K562 (cell line): ENCODE measurements at regions of chr3 and their contacts with region 1.

Region 1: GRCh38 chr3:24640330-24640877 is 145.8 kb upstream of the THRB start:
- DNase-seq: peak in 2 of 4 experiments; percentile 35 to 52
- ATAC-seq: peak; percentile 90
- H3K4me3 ChIP-seq: no peak overlapping the region
- H3K27ac ChIP-seq: no peak overlapping the region
- H3K4me1 ChIP-seq: peaks cover 0 to 4% of the 10 kb centered on the region in 2 experiments; a peak in 1 of 5 replicates
- H3K27me3 ChIP-seq: 0 out of 5 replicates have a peak, but pooled peaks cover 0 to 7% of the 10 kb centered on the region in 2 experiments
- CTCF ChIP-seq: peak; percentile 57 to 78 (median 59)
- EP300 ChIP-seq: no peak
- POLR2A ChIP-seq: no peak
- RAD21 ChIP-seq: peak; percentile 75 to 90

Region 2: DNA sequence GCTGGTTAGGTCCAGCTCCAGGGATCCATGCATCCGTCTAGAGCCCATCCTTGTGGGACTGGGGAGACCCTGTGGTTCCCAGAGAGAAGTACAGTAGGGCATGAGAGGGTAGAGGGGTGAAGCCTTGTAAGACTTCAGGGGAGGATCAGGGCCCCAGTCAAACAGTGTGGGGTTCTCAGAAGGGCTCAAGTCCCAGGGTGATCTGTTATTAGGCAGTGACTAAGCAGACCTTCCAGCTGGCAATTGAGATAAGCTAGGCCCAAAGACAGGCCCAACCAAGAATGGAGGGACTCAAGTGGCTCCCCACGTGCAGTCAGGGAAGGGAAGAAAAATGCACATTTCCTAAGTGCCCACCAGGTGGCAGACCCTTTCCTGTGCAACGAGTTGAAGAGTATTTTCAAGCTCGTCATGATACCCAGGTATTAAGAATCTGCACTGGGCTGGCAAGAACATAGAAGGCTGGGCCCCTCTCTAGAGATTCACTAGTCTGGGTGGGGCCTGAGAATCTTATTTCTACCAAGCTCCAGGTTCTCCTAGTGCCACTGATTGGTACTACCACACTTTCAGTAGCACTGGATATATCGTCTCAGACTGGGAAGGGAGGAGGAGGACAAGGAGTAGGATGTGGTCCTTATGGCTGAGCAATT is 454.5 kb before region 1 on chr3:
- CTCF ChIA-PET with region 1: interaction called, 4 read pairs
- POLR2A ChIA-PET with region 1: no interaction called
- in situ Hi-C with region 1: no loop called
- intact Hi-C with region 1: loop called (anchors 1 kb)
- DNase-seq: peak; percentile 88 to 94 (median 90)
- ATAC-seq: peak; percentile 98
- H3K4me3 ChIP-seq: no peak overlapping the region
- H3K27ac ChIP-seq: peak overlapping the region; percentile 76
- H3K4me1 ChIP-seq: peaks cover 4 to 8% of the 10 kb centered on the region in 2 experiments; a peak in 3 of 5 replicates
- H3K27me3 ChIP-seq: no peaks in the 10 kb centered on the region
- CTCF ChIP-seq: peak; percentile 92 to 93 (median 92)
- EP300 ChIP-seq: peak; percentile 87
- POLR2A ChIP-seq: no peak
- RAD21 ChIP-seq: peak; percentile 61 to 84

Region 3: DNA sequence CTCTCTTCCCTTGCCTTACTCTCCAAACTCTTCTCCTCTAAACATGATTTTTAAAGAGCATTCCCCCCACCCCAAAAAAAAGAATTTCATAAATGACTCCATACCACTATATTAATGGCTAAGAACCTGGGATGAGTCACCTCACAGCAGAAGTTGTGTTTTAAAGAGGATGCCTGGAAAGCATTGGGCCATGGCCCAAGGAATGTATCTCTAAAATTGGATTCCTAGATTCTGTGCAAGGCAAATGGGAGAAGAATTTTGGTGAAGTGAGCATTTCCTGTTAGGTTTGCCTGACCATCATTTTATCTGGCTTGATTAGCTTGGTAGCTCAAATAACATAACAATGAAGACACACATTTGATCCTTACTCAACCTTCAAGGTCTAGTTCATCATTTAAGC is 443.9 kb before region 1 on chr3:
- CTCF ChIA-PET with region 1: no interaction called
- POLR2A ChIA-PET with region 1: no interaction called
- in situ Hi-C with region 1: no loop called
- intact Hi-C with region 1: no loop called
- DNase-seq: no peak
- ATAC-seq: no peak
- H3K4me3 ChIP-seq: no peak overlapping the region
- H3K27ac ChIP-seq: no peak overlapping the region
- H3K4me1 ChIP-seq: no peaks in the 10 kb centered on the region
- H3K27me3 ChIP-seq: no peaks in the 10 kb centered on the region
- CTCF ChIP-seq: no peak
- EP300 ChIP-seq: no peak
- POLR2A ChIP-seq: no peak
- RAD21 ChIP-seq: no peak

Region 4: DNA sequence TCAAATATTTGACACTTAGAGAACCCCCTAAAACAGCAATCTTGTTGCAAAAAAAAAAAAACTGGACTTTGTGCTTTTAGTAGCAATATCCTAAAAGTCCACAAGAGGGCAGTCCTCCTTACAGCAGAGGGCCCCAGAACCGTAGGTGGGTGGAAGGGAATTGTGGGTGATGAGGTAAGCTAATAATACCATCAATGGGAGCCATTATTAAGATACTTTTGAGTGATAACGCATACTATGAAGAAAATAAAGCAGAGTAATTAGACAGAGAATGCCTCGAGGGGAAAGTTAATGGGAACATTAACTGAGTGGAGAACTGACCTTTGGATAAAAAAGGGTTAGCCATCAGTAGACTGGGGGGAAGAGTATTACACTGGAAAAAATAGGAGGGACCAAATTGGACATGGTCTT is 375.7 kb before region 1 on chr3:
- CTCF ChIA-PET with region 1: interaction called, 4 read pairs
- POLR2A ChIA-PET with region 1: no interaction called
- in situ Hi-C with region 1: no loop called
- intact Hi-C with region 1: loop called (anchors 1 kb)
- DNase-seq: peak; percentile 74 to 83 (median 78)
- ATAC-seq: peak; percentile 52
- H3K4me3 ChIP-seq: no peak overlapping the region
- H3K27ac ChIP-seq: no peak overlapping the region
- H3K4me1 ChIP-seq: peaks cover 9 to 24% of the 10 kb centered on the region in 2 experiments; a peak in 4 of 5 replicates
- H3K27me3 ChIP-seq: no peaks in the 10 kb centered on the region
- CTCF ChIP-seq: peak; percentile 71 to 87 (median 85)
- EP300 ChIP-seq: no peak
- POLR2A ChIP-seq: no peak
- RAD21 ChIP-seq: peak; percentile 73 to 82

Region 5: GRCh38 chr3:24365194-24365612 is 275.2 kb before region 1 on chr3:
- CTCF ChIA-PET with region 1: no interaction called
- POLR2A ChIA-PET with region 1: no interaction called
- in situ Hi-C with region 1: no loop called
- intact Hi-C with region 1: loop called (anchors 10 kb)
- DNase-seq: no peak
- ATAC-seq: peak; percentile 52
- H3K4me3 ChIP-seq: no peak overlapping the region
- H3K27ac ChIP-seq: peak overlapping the region; percentile 31; the same call in 1 of the 3 replicates
- H3K4me1 ChIP-seq: peaks cover 0 to 4% of the 10 kb centered on the region in 2 experiments; a peak in 3 of 5 replicates
- H3K27me3 ChIP-seq: no peaks in the 10 kb centered on the region
- CTCF ChIP-seq: no peak
- EP300 ChIP-seq: no peak
- POLR2A ChIP-seq: no peak
- RAD21 ChIP-seq: no peak

Region 6: DNA sequence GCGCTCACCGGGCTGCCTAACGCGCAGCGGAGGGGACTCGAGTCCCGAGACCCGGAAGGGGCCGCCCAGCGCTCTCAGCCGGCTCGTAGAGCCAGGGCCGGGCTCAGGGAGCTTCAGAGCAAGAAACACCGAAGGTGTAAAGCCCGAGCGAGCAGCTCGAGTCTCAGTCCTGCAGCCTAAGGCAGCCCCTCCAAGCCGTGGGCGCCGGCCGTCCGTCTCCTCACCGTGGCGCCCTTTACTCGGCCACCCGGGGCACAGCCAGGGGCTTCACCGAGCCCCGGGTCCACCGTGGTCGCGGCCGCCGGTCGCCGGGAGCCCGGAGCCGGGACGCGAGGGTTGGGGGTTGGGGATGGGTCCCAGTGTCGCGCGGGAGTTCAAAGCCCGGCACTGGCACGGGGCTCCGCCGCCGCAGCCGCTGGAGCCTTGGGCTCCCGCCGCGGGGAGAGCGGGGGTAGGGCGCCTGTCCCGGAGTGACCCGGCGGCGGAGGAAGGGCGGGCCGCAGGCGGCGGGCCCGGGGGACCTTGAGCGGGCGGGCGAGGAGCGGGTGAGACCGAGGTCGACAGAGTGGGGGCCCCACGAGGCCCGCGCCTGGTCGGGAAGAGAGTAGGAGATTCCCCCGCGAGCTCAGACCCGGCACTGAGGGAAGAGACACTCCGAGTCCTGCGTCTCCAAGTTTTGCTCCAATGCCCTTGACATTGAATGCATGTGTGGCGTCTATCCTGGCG is 118.8 kb before region 1 on chr3:
- CTCF ChIA-PET with region 1: no interaction called
- POLR2A ChIA-PET with region 1: no interaction called
- in situ Hi-C with region 1: no loop called
- intact Hi-C with region 1: loop called (anchors 10 kb)
- DNase-seq: peak; percentile 56 to 69 (median 64)
- ATAC-seq: peak; percentile 88
- H3K4me3 ChIP-seq: peak overlapping the region; percentile 55
- H3K27ac ChIP-seq: peak overlapping the region; percentile 55
- H3K4me1 ChIP-seq: peaks cover 26 to 28% of the 10 kb centered on the region in 2 experiments
- H3K27me3 ChIP-seq: no peaks in the 10 kb centered on the region
- CTCF ChIP-seq: peak in 1 of 3 experiments; percentile 29; a peak in 2 of 6 replicates
- EP300 ChIP-seq: no peak
- POLR2A ChIP-seq: peak; percentile 71
- RAD21 ChIP-seq: peak; percentile 31 to 33; a peak in 2 of 4 replicates